Activated T-helper 1 cell treated with anti-CD3 and anti-CD28 coated beads, Interleukin-12 subunit alpha, Interleukin-12 subunit beta, Interleukin-2, Interleukin-4 antibody, amounts not matched to agents 30 ng/mL and 10 ng/mL and 1 ng/mL, durations not matched to agents 14 hours and 24 hours and 36 hours (primary cell): ENCODE measurements at regions of chr17 and their contacts with region 1.

Region 1: GRCh38 chr17:8997994-8998628 is 23.2 kb upstream of the NTN1 start:
- DNase-seq: peak; percentile 67
- H3K4me3 Mint-ChIP-seq: no peak overlapping the region
- H3K27ac Mint-ChIP-seq: no peak overlapping the region
- H3K4me1 Mint-ChIP-seq: no peaks in the 10 kb centered on the region
- H3K27me3 Mint-ChIP-seq: peaks cover 35% of the 10 kb centered on the region

Region 2: GRCh38 chr17:8409966-8410864 is 587.9 kb before region 1 on chr17:
- intact Hi-C with region 1: loop called (anchors 1 kb)
- DNase-seq: peak; percentile 63
- H3K4me3 Mint-ChIP-seq: no peak overlapping the region
- H3K27ac Mint-ChIP-seq: no peak overlapping the region
- H3K4me1 Mint-ChIP-seq: peaks cover 22% of the 10 kb centered on the region
- H3K27me3 Mint-ChIP-seq: peaks cover 26% of the 10 kb centered on the region

Region 3: GRCh38 chr17:8753976-8754440 is 244.1 kb before region 1 on chr17:
- intact Hi-C with region 1: loop called (anchors 1 kb)
- DNase-seq: no peak
- H3K4me3 Mint-ChIP-seq: no peak overlapping the region
- H3K27ac Mint-ChIP-seq: no peak overlapping the region
- H3K4me1 Mint-ChIP-seq: no peaks in the 10 kb centered on the region
- H3K27me3 Mint-ChIP-seq: peaks cover 6% of the 10 kb centered on the region

Region 4: DNA sequence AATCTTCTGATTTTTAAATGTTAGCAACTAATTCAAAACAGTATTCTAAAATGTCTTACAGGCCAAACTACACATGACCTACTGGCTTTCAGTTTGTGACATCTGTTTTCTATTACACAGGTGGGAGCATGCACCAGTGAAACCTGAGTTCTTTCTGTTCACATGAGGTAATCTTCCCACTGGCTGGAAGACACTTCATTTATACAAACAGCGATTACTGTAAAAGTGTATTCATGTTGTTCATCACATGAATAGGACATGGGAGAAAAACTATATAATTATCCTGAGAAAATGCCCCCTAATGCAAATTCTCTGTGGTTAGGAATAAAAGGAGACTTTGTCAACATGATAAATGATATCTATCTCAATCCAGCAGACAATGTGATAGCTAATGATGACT is 21.5 kb before region 1 on chr17:
- intact Hi-C with region 1: no loop called
- DNase-seq: no peak
- H3K4me3 Mint-ChIP-seq: no peak overlapping the region
- H3K27ac Mint-ChIP-seq: no peak overlapping the region
- H3K4me1 Mint-ChIP-seq: peaks cover 10% of the 10 kb centered on the region
- H3K27me3 Mint-ChIP-seq: peaks cover 3% of the 10 kb centered on the region